Panc1 (cell line): ENCODE measurements at regions of chr12 and their contacts with region 1.

Region 1: DNA sequence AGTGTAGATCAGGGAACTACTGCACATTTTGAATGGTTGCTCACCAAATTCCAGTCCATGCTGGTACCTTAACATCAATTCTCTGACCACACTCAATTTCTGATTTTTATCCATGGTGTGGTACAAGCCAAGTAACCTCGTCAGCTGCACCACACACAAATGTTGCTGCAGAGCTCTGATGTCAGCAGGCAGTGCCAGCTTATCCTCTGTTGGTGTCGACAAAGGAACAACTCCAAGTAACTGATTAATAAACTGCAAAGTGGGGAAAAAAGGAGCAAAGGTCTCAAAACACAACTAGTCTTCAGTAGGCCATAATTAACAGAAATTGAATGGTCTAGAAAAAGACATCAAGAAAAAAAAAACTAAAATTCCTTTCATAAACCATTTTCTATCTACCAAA is 47.4 kb downstream of the NAA25 start:
- DNase-seq: no peak
- ATAC-seq: no peak
- H3K4me3 ChIP-seq: no peak overlapping the region
- H3K27ac ChIP-seq: no peak overlapping the region
- H3K4me1 ChIP-seq: no peaks in the 10 kb centered on the region
- H3K27me3 ChIP-seq: no peaks in the 10 kb centered on the region
- CTCF ChIP-seq: no peak

Region 2: GRCh38 chr12:111964935-111965334 is 96.2 kb before region 1 on chr12:
- CTCF ChIA-PET with region 1: no interaction called
- POLR2A ChIA-PET with region 1: no interaction called
- in situ Hi-C with region 1: no loop called
- intact Hi-C with region 1: no loop called
- DNase-seq: no peak
- ATAC-seq: no peak
- H3K4me3 ChIP-seq: no peak overlapping the region
- H3K27ac ChIP-seq: no peak overlapping the region
- H3K4me1 ChIP-seq: no peaks in the 10 kb centered on the region
- H3K27me3 ChIP-seq: no peaks in the 10 kb centered on the region
- CTCF ChIP-seq: no peak

Region 3: DNA sequence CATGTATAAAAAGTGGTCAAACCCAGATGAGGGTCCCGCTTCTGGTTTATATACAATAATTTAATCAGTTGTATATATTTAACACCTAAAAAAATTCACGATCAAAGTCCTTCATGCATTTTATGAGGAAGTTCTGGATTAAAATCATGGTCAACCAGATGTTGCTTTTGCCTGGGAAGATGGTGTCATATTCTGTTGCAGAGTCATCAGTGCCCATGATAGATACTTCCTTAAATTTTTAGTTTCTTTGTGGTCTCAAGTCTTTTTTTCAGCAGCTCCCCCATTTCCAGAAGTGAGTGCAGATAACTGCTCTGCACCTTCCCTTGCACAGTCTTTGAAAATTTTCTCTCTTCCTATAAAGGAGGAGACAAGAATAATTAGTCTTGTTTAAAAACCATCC is 31.8 kb before region 1 on chr12:
- CTCF ChIA-PET with region 1: no interaction called
- POLR2A ChIA-PET with region 1: no interaction called
- in situ Hi-C with region 1: no loop called
- intact Hi-C with region 1: no loop called
- DNase-seq: no peak
- ATAC-seq: no peak
- H3K4me3 ChIP-seq: no peak overlapping the region
- H3K27ac ChIP-seq: no peak overlapping the region
- H3K4me1 ChIP-seq: no peaks in the 10 kb centered on the region
- H3K27me3 ChIP-seq: no peaks in the 10 kb centered on the region
- CTCF ChIP-seq: no peak

Region 4: GRCh38 chr12:112087055-112087850 is 26.1 kb after region 1 on chr12:
- CTCF ChIA-PET with region 1: no interaction called
- POLR2A ChIA-PET with region 1: interaction called, 10 read pairs
- in situ Hi-C with region 1: no loop called
- intact Hi-C with region 1: no loop called
- DNase-seq: no peak
- ATAC-seq: peak; percentile 45; the same call in 1 of the 2 replicates
- H3K4me3 ChIP-seq: no peak overlapping the region
- H3K27ac ChIP-seq: no peak overlapping the region
- H3K4me1 ChIP-seq: no peaks in the 10 kb centered on the region
- H3K27me3 ChIP-seq: no peaks in the 10 kb centered on the region
- CTCF ChIP-seq: no peak

Region 5: GRCh38 chr12:112140728-112141127 is 79.6 kb after region 1 on chr12:
- CTCF ChIA-PET with region 1: no interaction called
- POLR2A ChIA-PET with region 1: interaction called, 17 read pairs
- in situ Hi-C with region 1: no loop called
- intact Hi-C with region 1: no loop called
- DNase-seq: no peak
- ATAC-seq: no peak
- H3K4me3 ChIP-seq: no peak overlapping the region
- H3K27ac ChIP-seq: no peak overlapping the region
- H3K4me1 ChIP-seq: no peaks in the 10 kb centered on the region
- H3K27me3 ChIP-seq: no peaks in the 10 kb centered on the region
- CTCF ChIP-seq: no peak